Left cardiac atrium (tissue), 4 donors: ENCODE measurements at regions of chr16 and their contacts with region 1.

Region 1: DNA sequence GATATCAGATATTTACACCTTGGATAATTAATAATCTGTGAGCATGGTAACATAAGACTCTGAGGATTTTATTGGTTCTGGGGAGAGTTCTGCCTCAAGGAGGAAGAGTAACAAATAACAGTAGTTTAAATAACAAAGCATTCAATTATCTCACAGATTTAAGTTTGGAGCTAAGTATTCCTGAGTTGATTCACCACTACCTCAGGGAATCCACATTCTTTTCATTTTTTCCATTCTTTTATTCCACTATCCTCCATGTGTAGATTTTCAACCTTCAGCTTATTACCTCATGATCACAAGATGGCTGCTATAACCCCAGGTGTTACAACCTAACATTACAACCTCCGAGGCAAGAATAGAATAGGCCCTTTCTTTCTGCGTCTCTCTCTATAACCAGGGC is 252.2 kb upstream of the TOX3 start:
- DNase-seq: no peak
- ATAC-seq: no peak

Region 2: DNA sequence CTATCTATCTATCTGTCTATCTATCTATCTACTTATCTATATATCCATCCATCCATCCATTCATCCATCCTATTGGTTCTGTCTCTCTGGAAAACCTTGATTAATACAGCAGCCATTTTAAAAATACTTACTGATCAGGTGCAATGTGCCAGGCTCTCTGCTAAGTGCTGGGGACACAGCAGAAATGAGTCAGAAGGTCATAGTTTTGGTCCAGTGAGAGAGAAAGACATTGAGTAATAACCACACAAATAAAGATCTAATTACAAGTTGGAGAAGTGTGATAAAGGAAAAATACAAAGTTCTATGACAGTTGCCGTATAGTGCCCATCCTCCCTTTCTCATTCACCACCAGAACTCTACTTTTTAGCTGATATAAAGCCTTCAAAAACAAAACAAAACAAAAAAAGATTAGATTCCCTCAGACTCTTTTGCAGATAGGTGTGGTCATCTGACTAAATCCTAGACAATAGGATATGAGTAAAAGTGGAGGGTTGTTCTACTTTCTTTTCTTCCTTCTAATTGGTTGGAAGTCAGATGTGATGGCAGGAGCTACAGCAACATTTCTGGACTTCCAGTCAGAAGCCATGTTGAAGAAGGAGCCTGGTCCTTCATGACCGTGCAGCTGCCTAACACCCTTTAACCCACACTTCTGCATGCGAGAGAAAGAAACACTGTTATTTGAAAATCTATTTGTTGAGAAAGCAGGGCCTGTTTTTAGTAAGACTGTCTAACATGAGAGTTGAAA is 180.2 kb before region 1 on chr16:
- intact Hi-C with region 1: loop called in 1 of 2 experiments (anchors 5 kb)
- DNase-seq: no peak
- ATAC-seq: no peak

Region 3: GRCh38 chr16:52729731-52730130 is 69.4 kb before region 1 on chr16:
- intact Hi-C with region 1: no loop called
- DNase-seq: no peak
- ATAC-seq: no peak

Region 4: DNA sequence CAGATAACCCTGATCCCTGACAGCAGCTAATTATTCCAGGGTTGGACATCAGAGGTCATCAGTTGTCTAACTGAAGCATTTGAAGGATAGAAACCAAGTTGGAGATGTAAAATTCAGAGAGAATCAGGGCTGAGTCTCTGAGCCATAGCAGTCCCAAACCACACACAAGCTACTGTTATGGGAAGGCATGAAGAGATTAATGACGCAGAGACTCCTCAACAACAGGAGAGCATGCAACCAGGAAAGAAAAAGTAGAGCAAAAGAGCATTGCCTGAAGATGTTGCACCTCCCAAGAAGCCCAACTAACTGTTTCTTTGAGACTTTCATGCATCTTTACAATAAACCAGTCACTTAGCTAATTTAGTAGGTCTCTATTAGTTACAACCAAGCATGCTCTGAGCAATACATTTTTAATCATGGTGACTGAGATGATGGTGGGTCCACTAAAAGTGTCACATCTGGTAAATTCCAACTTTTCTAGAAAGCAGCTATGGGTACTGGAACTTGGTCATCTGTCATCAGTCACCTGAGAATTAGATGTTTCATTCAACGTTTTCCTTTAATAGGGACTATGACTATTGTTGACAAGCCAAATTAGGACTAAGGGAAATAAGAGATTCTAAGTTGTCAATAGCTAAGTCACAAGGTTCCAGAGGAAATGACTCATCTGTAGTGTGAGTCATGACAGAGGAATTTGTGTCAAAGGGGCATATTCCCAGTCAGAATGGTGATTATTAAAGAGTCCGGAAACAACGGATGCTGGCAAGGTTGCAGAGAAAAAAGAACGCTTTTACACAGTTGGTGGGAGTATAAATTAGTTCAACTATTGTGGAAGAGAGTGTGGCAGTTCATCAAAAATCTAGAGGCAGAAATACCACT is 13.8 kb after region 1 on chr16:
- intact Hi-C with region 1: no loop called
- DNase-seq: no peak
- ATAC-seq: peak in 1 of 2 donors; percentile 41

Region 5: GRCh38 chr16:52837251-52837650 is 38.1 kb after region 1 on chr16:
- intact Hi-C with region 1: no loop called
- DNase-seq: no peak
- ATAC-seq: no peak